Activated CD4-positive, alpha-beta T cell treated with anti-CD3 and anti-CD28 coated beads for 36 hours (primary cell): ENCODE measurements at regions of chrX and their contacts with region 1.

Region 1: DNA sequence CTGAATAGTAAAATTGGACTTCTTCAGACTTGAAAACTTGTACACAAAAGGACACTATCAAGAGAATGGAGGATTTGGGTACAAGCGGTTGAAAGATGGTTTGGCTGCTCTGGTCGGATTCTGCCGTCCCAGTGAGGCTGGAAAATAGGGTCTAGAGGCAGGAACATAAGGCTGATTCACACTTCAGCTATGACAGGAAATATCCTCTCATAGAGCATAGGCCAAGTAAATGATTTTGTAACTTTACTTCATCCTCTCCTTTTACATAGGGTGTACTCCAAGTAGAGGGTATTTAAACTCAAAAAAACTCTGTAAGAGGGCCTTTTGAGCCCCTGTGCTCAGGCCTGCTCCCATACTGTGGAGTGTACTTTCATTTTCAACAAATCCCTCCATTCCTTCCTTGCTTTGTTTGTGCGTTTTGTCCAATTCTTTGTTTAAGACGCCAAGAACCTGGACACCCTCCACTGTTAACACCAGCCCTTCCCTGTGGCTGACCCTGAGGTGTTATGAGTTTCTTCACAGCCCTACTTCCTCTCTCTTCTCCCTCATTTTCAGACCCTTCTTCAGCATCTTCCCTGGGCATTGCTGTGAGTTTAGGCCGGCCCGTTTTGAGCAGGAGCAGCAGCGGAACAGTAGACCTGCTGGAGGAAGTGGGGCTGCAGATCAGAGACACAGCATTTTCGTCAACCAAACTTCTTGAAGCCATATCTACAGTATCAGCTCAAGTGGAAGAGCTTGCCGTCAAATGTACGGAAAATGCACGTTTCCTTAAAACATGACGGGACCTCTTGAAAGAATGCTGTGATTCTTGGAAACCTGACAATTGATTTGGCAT is 7.2 kb downstream of the PGAM4 start:
- DNase-seq: peak; percentile 16
- ATAC-seq: peak; percentile 54
- H3K4me3 Mint-ChIP-seq: peak overlapping the region; percentile 68
- H3K27ac Mint-ChIP-seq: peak overlapping the region; percentile 92
- H3K4me1 Mint-ChIP-seq: peaks cover 47% of the 10 kb centered on the region
- H3K27me3 Mint-ChIP-seq: no peaks in the 10 kb centered on the region

Region 2: GRCh38 chrX:77910108-77910840 is 52.0 kb before region 1 on chrX and contains the start of gene ATP7A:
- CTCF ChIA-PET with region 1: no interaction called
- POLR2A ChIA-PET with region 1: no interaction called
- intact Hi-C with region 1: loop called (anchors 1 to 2 kb)
- DNase-seq: peak; percentile 94
- ATAC-seq: peak; percentile 94
- H3K4me3 Mint-ChIP-seq: peak within 1 kb of the TSS; percentile 85
- H3K27ac Mint-ChIP-seq: peak within 1 kb of the TSS; percentile 99
- H3K4me1 Mint-ChIP-seq: peaks cover 13% of the 10 kb centered on the region
- H3K27me3 Mint-ChIP-seq: no peaks in the 10 kb centered on the region
- total RNA-seq, gene ATP7A: 9.5 to 9.7 TPM

Region 3: DNA sequence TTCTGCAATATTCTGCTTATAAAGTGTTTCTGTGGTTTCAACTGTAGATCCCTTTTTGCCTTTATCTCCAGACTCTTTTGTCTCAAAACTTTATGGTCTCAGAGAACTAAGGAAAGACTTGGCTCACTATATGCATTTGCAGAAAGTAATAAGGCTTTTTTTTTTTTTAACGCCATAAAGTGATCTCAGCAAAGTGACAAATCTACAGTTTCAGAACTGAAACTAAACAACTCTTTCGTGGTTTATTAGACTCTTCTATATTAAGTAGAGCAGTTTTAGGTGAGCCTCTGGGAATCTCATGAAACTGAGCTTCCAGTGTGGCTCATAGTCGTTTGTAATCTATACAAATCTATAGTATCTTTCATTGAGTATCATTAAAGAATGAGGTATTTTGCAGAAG is 36.5 kb before region 1 on chrX:
- CTCF ChIA-PET with region 1: no interaction called
- POLR2A ChIA-PET with region 1: no interaction called
- intact Hi-C with region 1: no loop called
- DNase-seq: no peak
- ATAC-seq: no peak
- H3K4me3 Mint-ChIP-seq: no peak overlapping the region
- H3K27ac Mint-ChIP-seq: no peak overlapping the region
- H3K4me1 Mint-ChIP-seq: peaks cover 7% of the 10 kb centered on the region
- H3K27me3 Mint-ChIP-seq: no peaks in the 10 kb centered on the region

Region 4: DNA sequence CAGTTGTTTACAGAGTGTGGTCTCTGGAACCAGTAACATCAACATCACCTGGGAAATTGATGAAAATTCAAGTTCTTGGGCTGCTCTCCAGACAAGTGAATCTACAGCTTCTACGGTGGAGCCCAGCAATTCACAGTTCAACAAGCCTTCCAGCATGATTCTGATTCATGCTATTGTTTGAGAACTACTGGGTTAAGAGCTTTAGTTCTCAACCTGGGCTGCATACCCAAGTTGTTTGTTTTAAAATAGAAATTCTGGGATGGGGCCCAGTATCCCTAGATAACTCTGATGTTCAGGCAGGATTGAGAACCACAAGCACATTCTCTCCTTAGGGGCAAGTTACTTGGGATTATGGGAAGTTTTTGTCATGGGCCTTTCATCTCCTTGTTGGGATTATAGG is 103.8 kb after region 1 on chrX:
- CTCF ChIA-PET with region 1: no interaction called
- POLR2A ChIA-PET with region 1: no interaction called
- intact Hi-C with region 1: loop called (anchors 2 kb)
- DNase-seq: no peak
- ATAC-seq: no peak
- H3K4me3 Mint-ChIP-seq: no peak overlapping the region
- H3K27ac Mint-ChIP-seq: no peak overlapping the region
- H3K4me1 Mint-ChIP-seq: peaks cover 18% of the 10 kb centered on the region
- H3K27me3 Mint-ChIP-seq: no peaks in the 10 kb centered on the region

Region 5: DNA sequence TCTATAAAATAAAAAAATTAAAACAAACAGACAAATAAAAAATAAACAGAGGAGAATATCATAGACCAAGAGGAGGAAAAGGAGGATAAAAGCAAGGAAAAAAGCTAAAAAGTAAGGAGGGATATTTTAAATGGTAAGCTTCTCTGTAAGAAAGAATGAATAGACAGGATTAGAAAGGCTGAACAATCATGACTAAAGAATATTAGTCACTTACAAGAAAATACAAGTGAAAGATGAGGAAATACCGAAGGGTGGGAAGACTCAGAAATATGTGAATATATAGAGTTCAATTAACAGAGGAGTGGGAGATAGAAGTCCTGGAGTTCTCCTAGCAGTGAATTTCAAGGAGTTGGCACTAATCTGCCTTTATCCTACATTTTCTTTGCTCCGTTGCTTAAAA is 534.2 kb after region 1 on chrX:
- CTCF ChIA-PET with region 1: no interaction called
- POLR2A ChIA-PET with region 1: no interaction called
- intact Hi-C with region 1: no loop called
- DNase-seq: no peak
- ATAC-seq: no peak
- H3K4me3 Mint-ChIP-seq: no peak overlapping the region
- H3K27ac Mint-ChIP-seq: no peak overlapping the region
- H3K4me1 Mint-ChIP-seq: peaks cover 4% of the 10 kb centered on the region
- H3K27me3 Mint-ChIP-seq: no peaks in the 10 kb centered on the region

Region 6: GRCh38 chrX:79161655-79162054 is 1199.4 kb after region 1 on chrX:
- CTCF ChIA-PET with region 1: no interaction called
- POLR2A ChIA-PET with region 1: no interaction called
- intact Hi-C with region 1: loop called in 1 of 2 experiments (anchors 5 kb)
- DNase-seq: peak; percentile 50
- ATAC-seq: peak; percentile 77
- H3K4me3 Mint-ChIP-seq: peak overlapping the region; percentile 75
- H3K27ac Mint-ChIP-seq: peak overlapping the region; percentile 93
- H3K4me1 Mint-ChIP-seq: peaks cover 62% of the 10 kb centered on the region
- H3K27me3 Mint-ChIP-seq: no peaks in the 10 kb centered on the region